SK-N-SH (cell line): ENCODE measurements at regions of chr20 and their contacts with region 1.

Region 1: GRCh38 chr20:381581-382290 is 1.2 kb downstream of the TRIB3 start:
- DNase-seq: peak; percentile 88
- H3K4me3 ChIP-seq: peak overlapping the region; percentile 73 to 79
- H3K27ac ChIP-seq: peak overlapping the region; percentile 18 to 74
- H3K4me1 ChIP-seq: peaks cover 0 to 7% of the 10 kb centered on the region in 2 experiments; a peak in 1 of 4 replicates
- H3K27me3 ChIP-seq: no peaks in the 10 kb centered on the region
- CTCF ChIP-seq: no peak
- EP300 ChIP-seq: no peak
- RAD21 ChIP-seq: no peak

Region 2: GRCh38 chr20:347640-348484 is 33.9 kb before region 1 on chr20:
- CTCF ChIA-PET with region 1: no interaction called
- POLR2A ChIA-PET with region 1: interaction called, 13 read pairs
- DNase-seq: peak; percentile 100
- H3K4me3 ChIP-seq: peak overlapping the region; percentile 62 to 88
- H3K27ac ChIP-seq: peak overlapping the region; percentile 97 to 98
- H3K4me1 ChIP-seq: peaks cover 0 to 16% of the 10 kb centered on the region in 2 experiments; a peak in 2 of 4 replicates
- H3K27me3 ChIP-seq: no peaks in the 10 kb centered on the region
- CTCF ChIP-seq: no peak
- EP300 ChIP-seq: no peak; a peak in 1 of 4 replicates
- RAD21 ChIP-seq: no peak

Region 3: DNA sequence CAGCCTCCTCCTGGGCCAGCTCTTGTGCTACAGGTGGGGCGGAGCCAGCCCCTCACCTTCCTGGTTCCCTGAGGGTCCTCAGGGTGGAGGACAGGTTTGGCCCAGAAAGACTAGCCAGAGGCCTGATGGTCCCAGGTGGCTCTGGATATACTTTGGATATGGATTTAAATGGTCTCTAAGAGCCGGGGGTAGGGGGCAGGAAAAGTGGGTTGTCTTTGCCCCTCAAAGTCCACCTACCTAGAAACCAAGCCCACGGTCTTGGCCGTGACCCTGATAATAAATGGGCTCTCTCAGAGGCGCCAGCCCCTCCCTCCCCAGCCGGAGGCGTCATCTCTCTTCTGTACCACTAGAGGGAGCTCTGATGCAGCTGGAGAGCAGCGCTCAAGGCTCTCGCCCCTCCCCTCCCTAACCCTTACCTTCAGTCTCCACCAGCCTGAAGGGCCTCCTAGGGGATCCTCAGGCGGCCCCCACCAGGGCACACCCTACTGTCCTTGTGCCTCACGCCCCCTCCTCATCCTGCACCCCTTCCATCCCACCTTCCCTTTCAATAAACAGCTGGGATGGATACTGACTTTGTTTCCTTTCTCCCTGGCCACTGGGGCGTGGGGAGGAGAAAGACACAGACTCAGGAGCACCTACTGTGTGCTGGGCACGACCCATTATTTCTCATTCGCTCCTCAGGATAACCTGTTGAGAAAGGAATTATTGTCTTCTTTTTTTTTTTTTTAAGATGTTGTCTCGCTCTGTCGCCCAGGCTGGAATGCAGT is 27.3 kb before region 1 on chr20:
- CTCF ChIA-PET with region 1: interaction called, 12 read pairs
- POLR2A ChIA-PET with region 1: interaction called, 4 read pairs
- DNase-seq: peak; percentile 90
- H3K4me3 ChIP-seq: peak overlapping the region in 1 of 2 experiments; percentile 54; a peak in 1 of 4 replicates
- H3K27ac ChIP-seq: no peak overlapping the region; a peak in 1 of 4 replicates
- H3K4me1 ChIP-seq: no peaks in the 10 kb centered on the region; a peak in 1 of 4 replicates
- H3K27me3 ChIP-seq: no peaks in the 10 kb centered on the region
- CTCF ChIP-seq: peak; percentile 91
- EP300 ChIP-seq: no peak
- RAD21 ChIP-seq: peak; percentile 96

Region 4: DNA sequence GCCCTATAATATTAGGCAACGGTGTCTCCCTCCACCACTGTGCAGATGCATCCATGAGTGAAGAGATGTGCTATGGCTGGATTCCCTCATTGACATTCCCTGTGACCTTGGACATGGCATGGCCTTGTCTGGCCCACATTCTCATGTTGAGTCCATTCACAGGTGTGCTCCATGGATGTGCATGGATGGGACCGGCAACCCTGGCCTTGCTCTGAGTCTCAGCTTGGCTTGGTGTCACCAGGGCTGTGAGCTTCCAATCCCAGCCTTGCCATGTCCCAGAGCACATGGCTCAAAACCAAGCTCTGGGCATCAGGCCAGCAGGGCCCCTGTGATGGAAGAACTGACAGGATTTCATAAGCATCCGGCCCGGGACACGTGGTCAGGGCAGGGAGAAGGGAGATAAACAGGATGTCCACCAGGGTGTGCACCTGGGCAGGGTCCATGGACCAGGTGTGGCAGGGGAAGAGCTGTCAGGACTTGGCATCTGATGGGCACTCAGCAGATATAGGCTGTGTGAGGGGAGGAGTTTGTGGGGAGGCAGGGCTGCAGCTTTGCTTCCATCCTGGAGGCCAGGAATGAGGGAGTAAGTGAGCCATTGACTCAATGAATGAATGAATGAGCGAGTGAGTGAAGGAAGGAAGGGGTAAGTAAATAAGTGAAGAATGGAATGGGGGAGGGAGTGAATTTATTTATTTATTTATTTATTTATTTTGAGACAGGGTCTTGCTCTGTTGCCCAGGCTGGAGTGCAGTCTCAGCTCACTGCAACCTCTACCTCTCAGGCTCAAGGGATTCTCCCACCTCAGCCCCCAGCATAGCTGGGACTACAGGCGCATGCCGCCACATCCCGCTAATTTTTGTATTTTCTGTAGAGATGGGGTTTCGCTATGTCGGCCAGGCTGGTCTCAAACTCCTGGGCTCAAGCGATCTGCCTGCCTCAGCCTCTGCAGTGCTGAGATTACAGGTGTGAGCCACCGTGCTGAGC is 19.2 kb before region 1 on chr20:
- CTCF ChIA-PET with region 1: interaction called, 5 read pairs
- POLR2A ChIA-PET with region 1: interaction called, 11 read pairs
- DNase-seq: peak; percentile 74
- H3K4me3 ChIP-seq: no peak overlapping the region
- H3K27ac ChIP-seq: no peak overlapping the region
- H3K4me1 ChIP-seq: peaks cover 3 to 12% of the 10 kb centered on the region in 2 experiments; a peak in 1 of 4 replicates
- H3K27me3 ChIP-seq: no peaks in the 10 kb centered on the region
- CTCF ChIP-seq: peak; percentile 43
- EP300 ChIP-seq: no peak
- RAD21 ChIP-seq: peak; percentile 47

Region 5: GRCh38 chr20:407133-407952 is 25.6 kb after region 1 on chr20:
- CTCF ChIA-PET with region 1: interaction called, 6 read pairs
- POLR2A ChIA-PET with region 1: interaction called, 15 read pairs
- DNase-seq: peak; percentile 94
- H3K4me3 ChIP-seq: peak overlapping the region; percentile 53 to 55
- H3K27ac ChIP-seq: peak overlapping the region; percentile 66 to 81
- H3K4me1 ChIP-seq: peaks cover 4 to 18% of the 10 kb centered on the region in 2 experiments; a peak in 2 of 4 replicates
- H3K27me3 ChIP-seq: no peaks in the 10 kb centered on the region
- CTCF ChIP-seq: peak; percentile 43
- EP300 ChIP-seq: no peak
- RAD21 ChIP-seq: peak; percentile 25; the same call in 1 of the 2 replicates